Activated CD4-positive, alpha-beta memory T cell treated with anti-CD3 and anti-CD28 coated beads, Interleukin-2, amount 10 ng/mL, durations not matched to agents 7 days and 5 days (primary cell): ENCODE measurements at regions of chr3 and their contacts with region 1.

Region 1: DNA sequence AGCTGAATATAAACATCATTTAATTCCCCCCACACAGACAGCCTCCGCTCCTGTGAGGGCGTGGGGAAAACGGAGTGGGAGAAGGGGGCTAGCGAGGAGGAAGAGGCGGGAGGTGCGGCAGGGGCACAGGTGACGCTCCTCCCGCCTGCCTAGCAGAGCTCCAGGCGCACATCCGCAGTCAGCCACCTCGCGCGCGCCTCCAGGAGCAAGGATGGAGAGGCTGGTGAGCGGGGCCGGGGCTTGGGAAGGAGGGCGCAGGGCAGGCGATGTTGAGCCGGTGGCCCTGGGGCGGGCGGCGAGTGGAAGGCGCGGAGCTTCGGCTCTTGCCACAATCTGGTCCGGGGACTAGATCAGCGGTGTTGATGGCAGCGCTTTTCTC is at the start of gene CD200:
- DNase-seq: peak; percentile 55
- H3K4me3 Mint-ChIP-seq: peak within 1 kb of the TSS; percentile 84
- H3K27ac Mint-ChIP-seq: peak within 1 kb of the TSS; percentile 67
- H3K4me1 Mint-ChIP-seq: peaks cover 44% of the 10 kb centered on the region
- H3K27me3 Mint-ChIP-seq: no peaks in the 10 kb centered on the region
- total RNA-seq, gene CD200: 9.1 to 9.2 TPM

Region 2: GRCh38 chr3:112017091-112017490 is 315.9 kb before region 1 on chr3:
- CTCF ChIA-PET with region 1: no interaction called
- POLR2A ChIA-PET with region 1: no interaction called
- DNase-seq: no peak
- H3K4me3 Mint-ChIP-seq: no peak overlapping the region
- H3K27ac Mint-ChIP-seq: no peak overlapping the region
- H3K4me1 Mint-ChIP-seq: peaks cover 17% of the 10 kb centered on the region
- H3K27me3 Mint-ChIP-seq: no peaks in the 10 kb centered on the region

Region 3: DNA sequence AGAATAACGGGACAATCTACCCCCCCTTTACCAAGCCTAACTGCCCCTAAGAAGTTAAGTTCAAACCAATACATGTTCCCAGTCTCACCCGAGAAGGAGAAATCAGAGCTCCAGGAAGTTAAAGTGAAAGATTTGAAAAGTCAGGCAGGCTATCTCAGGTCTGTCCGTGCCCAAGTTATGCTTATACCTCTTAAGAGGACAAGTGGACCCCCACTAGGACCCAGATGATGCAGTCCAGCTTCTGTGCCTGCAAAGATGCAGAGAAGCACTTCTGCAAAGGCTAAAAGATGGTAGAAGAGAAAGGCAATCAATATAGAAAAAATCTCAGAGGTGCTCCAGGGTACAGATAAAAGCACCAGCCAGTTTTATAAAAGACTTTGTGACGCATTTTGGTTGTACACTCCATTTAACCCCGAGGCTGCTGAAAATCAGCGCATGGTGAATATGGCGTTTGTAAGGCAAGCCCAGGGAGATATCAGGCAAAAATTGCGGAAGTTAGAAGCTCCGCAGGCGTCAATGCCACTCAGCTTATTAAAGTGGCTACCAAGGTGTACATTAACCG is 29.1 kb before region 1 on chr3:
- CTCF ChIA-PET with region 1: interaction called, 4 read pairs
- POLR2A ChIA-PET with region 1: interaction called, 10 read pairs
- DNase-seq: no peak
- H3K4me3 Mint-ChIP-seq: no peak overlapping the region
- H3K27ac Mint-ChIP-seq: no peak overlapping the region
- H3K4me1 Mint-ChIP-seq: peaks cover 3% of the 10 kb centered on the region
- H3K27me3 Mint-ChIP-seq: no peaks in the 10 kb centered on the region

Region 4: GRCh38 chr3:112364291-112364690 is 31.3 kb after region 1 on chr3:
- CTCF ChIA-PET with region 1: interaction called, 4 read pairs
- POLR2A ChIA-PET with region 1: interaction called, 13 read pairs
- DNase-seq: no peak
- H3K4me3 Mint-ChIP-seq: peak overlapping the region; percentile 0
- H3K27ac Mint-ChIP-seq: peak overlapping the region; percentile 24
- H3K4me1 Mint-ChIP-seq: peaks cover 23% of the 10 kb centered on the region
- H3K27me3 Mint-ChIP-seq: no peaks in the 10 kb centered on the region

Region 5: DNA sequence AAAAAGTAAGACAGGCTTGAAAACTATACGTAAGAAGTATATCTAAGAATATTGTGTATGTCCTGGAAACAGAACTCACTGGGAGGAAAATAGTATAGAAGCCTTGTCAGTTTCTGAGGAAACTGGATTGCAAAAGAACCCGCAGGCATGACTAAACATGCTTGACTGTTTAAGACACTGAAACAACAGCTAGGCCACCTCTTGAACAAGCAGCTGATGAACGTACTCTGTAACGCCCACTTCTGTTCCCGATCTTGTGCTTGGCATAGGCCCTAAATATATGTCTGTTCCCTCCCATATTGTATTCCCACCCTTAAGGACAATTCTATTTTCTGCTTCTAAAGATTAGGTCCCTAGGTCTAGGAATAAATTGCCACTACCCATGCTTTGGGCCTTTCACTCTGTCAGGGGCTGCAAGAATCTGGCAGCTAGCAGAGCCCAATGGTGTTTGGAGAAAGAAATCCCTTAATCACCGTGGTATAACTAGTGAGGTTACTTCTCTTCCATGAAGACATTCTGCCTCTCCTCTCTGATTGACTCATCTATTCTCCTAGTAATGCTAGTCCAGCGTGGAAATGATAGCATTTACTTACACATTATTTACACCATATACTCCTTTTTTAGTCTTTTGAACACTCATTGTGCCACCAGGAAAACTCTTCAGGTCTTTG is 46.2 kb after region 1 on chr3:
- CTCF ChIA-PET with region 1: no interaction called
- POLR2A ChIA-PET with region 1: no interaction called
- DNase-seq: no peak
- H3K4me3 Mint-ChIP-seq: no peak overlapping the region
- H3K27ac Mint-ChIP-seq: no peak overlapping the region
- H3K4me1 Mint-ChIP-seq: peaks cover 15% of the 10 kb centered on the region
- H3K27me3 Mint-ChIP-seq: no peaks in the 10 kb centered on the region

Region 6: GRCh38 chr3:112437146-112438022 is 104.4 kb after region 1 on chr3:
- CTCF ChIA-PET with region 1: interaction called, 34 read pairs
- POLR2A ChIA-PET with region 1: interaction called, 7 read pairs
- DNase-seq: peak; percentile 37
- H3K4me3 Mint-ChIP-seq: peak overlapping the region; percentile 33
- H3K27ac Mint-ChIP-seq: peak overlapping the region; percentile 78
- H3K4me1 Mint-ChIP-seq: peaks cover 43% of the 10 kb centered on the region
- H3K27me3 Mint-ChIP-seq: no peaks in the 10 kb centered on the region

Region 7: DNA sequence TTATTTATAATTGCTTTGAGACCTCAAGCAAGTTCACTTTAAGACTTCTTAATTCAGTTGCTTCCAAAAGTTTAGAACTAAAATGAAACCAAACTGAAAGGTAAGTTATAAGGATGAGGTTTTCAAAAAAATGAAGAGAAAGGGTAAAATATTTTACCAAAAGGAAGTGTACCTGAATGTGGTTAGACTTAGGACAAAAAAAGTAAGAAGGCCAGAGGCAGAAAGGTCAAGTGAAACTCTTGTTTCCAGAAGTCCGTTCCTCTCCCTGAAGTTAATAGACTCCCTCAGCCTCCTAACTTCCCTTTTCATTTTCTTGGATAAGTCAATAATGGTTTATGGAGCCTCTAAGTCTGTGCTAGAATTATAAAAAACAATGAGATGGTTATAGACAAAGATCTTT is 149.7 kb after region 1 on chr3:
- CTCF ChIA-PET with region 1: no interaction called
- POLR2A ChIA-PET with region 1: no interaction called
- DNase-seq: no peak
- H3K4me3 Mint-ChIP-seq: peak overlapping the region; percentile 28
- H3K27ac Mint-ChIP-seq: peak overlapping the region; percentile 12
- H3K4me1 Mint-ChIP-seq: peaks cover 45% of the 10 kb centered on the region
- H3K27me3 Mint-ChIP-seq: no peaks in the 10 kb centered on the region

Region 8: DNA sequence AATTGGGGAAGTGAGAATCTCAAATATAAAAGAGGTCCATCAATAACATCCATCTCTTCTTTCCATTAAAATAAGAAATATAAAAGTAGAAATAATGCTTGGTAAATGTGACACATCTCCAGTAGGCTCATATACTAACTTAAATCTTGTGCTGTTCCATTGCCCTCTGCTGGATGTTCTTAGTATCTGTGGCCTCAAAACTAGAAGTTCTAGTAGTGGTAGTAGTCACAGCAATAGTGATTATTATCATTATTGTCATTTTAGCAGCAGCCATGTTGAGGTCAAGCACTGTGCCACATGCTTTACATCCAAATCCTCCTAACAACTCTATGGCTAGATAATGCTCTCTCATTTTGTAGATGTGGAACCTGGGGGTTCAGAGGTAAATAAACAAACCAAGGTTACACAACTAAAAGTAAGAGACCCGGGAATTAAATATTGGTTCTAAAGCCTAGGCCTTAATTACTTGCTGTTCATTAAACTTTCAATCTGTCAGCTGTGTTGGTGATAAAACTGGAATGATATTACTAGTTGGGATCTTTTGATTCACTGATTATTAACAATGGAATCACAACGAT is 186.5 kb after region 1 on chr3:
- CTCF ChIA-PET with region 1: interaction called, 17 read pairs
- POLR2A ChIA-PET with region 1: interaction called, 3 read pairs
- DNase-seq: peak; percentile 33
- H3K4me3 Mint-ChIP-seq: no peak overlapping the region
- H3K27ac Mint-ChIP-seq: no peak overlapping the region
- H3K4me1 Mint-ChIP-seq: peaks cover 31% of the 10 kb centered on the region
- H3K27me3 Mint-ChIP-seq: no peaks in the 10 kb centered on the region